MCF 10A (cell line): ENCODE measurements at regions of chr11 and their contacts with region 1.

Region 1: DNA sequence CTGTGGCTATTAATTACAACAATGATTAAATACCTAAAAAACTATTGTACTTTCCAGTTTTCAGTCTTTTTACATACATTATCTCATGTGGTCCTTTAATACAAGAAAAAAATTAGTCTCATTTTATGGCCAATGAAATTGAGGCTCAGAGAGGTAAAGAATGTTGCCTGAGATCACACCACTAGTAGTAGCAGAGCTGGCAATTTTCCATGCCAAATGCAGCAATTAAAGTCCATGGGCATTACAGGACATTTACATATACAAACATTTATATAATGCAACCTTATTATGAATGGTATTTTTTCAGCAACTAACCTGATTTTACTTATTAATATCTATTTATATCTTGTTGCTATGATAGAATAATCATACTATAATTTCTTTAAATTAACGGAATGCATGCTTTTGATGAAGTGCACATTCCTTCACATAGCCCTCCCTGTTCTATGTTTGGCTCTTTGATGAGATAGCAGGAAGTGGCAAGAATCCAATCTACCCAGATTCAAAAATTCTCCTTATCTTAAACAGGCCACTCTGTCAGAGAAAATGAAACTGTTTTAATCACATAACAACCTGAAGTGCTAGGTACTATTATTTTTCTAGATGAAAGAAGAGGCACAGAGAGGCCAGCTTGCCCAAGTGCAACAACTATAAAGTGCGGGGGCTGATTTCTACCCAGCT is 120.9 kb upstream of the LDLRAD3 start:
- DNase-seq: peak; percentile 15
- H3K4me3 Mint-ChIP-seq: no peak overlapping the region
- H3K27ac Mint-ChIP-seq: peak overlapping the region; percentile 29
- H3K4me1 Mint-ChIP-seq: peaks cover 17% of the 10 kb centered on the region
- H3K27me3 Mint-ChIP-seq: no peaks in the 10 kb centered on the region
- CTCF ChIP-seq: no peak

Region 2: DNA sequence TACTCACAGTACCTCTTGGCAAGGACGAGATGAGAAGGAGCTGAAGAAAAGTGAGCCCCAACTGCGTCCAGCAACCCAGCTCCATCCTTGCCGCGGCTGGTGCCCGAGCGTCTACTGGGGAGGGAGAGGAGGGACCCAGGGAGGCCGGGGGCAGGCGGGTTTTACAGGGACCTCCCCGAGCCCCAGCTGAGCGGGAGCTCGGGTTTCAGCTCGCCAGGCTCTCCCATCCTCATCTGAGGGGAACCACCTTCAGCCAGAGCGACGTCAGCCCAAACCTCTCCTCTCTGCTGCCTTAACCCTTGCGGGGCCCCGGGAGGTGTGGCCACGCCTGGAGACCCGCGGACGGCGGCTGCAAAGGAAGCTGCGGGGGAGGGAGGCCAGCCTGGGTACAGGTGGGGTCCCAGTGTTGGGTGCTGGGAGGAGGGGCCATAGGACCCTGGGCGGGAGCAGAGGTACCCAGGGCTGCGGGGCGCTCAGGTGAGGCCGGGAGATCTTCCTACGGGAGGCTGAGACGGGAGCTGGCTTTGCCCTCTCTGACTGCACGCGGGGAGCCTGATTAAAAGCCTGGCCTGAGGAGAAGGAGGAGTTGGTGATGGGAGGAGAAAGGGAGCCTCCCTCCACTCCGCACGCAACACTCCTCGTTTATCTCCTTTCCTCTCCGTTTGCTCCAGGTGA is 297.3 kb before region 1 on chr11 and contains the start of gene PAMR1:
- CTCF ChIA-PET with region 1: no interaction called
- POLR2A ChIA-PET with region 1: no interaction called
- intact Hi-C with region 1: no loop called
- DNase-seq: no peak
- H3K4me3 Mint-ChIP-seq: no peak within 1 kb of the TSS
- H3K27ac Mint-ChIP-seq: no peak within 1 kb of the TSS
- H3K4me1 Mint-ChIP-seq: peaks cover 13% of the 10 kb centered on the region
- H3K27me3 Mint-ChIP-seq: peaks cover 25% of the 10 kb centered on the region
- CTCF ChIP-seq: no peak
- total RNA-seq, gene PAMR1: 0.51 TPM in 1 of 2 replicates, not detected in the other

Region 3: GRCh38 chr11:35617687-35618496 is 205.1 kb before region 1 on chr11 and contains the start of gene FJX1:
- CTCF ChIA-PET with region 1: interaction called, 20 read pairs
- POLR2A ChIA-PET with region 1: interaction called, 25 read pairs
- intact Hi-C with region 1: loop called (anchors 1 kb)
- DNase-seq: peak; percentile 87
- H3K4me3 Mint-ChIP-seq: peak within 1 kb of the TSS; percentile 82
- H3K27ac Mint-ChIP-seq: no peak within 1 kb of the TSS
- H3K4me1 Mint-ChIP-seq: peaks cover 28% of the 10 kb centered on the region
- H3K27me3 Mint-ChIP-seq: no peaks in the 10 kb centered on the region
- CTCF ChIP-seq: no peak
- total RNA-seq, gene FJX1: 33.3 and 53.7 TPM in 2 replicates

Region 4: DNA sequence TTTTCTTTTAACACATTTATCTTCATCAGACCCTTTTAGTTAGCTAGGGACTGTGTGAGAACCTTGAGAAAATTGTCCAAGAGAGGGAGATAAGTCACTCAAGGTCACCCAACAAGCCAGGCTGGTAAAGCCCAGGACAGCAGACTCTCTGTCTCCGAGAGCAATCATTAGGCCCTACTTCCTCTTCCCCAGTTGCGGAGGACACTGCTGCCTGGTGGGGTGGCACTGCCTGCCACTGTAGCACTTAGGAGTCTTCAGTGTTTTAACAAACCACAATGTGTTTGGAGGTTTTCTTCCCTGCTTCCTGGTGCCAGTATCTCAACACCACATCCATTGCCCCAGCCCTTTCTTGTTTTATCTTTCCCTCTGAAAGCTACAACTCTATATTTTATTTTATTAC is 11.2 kb before region 1 on chr11:
- CTCF ChIA-PET with region 1: interaction called, 43 read pairs
- POLR2A ChIA-PET with region 1: interaction called, 6 read pairs
- intact Hi-C with region 1: no loop called
- DNase-seq: no peak
- H3K4me3 Mint-ChIP-seq: no peak overlapping the region
- H3K27ac Mint-ChIP-seq: no peak overlapping the region
- H3K4me1 Mint-ChIP-seq: no peaks in the 10 kb centered on the region
- H3K27me3 Mint-ChIP-seq: no peaks in the 10 kb centered on the region
- CTCF ChIP-seq: no peak

Region 5: GRCh38 chr11:35907648-35908431 is 84.9 kb after region 1 on chr11:
- CTCF ChIA-PET with region 1: interaction called, 14 read pairs
- POLR2A ChIA-PET with region 1: interaction called, 8 read pairs
- intact Hi-C with region 1: no loop called
- DNase-seq: peak; percentile 95
- H3K4me3 Mint-ChIP-seq: peak overlapping the region; percentile 12
- H3K27ac Mint-ChIP-seq: peak overlapping the region; percentile 99
- H3K4me1 Mint-ChIP-seq: peaks cover 57% of the 10 kb centered on the region
- H3K27me3 Mint-ChIP-seq: no peaks in the 10 kb centered on the region
- CTCF ChIP-seq: no peak

Region 6: DNA sequence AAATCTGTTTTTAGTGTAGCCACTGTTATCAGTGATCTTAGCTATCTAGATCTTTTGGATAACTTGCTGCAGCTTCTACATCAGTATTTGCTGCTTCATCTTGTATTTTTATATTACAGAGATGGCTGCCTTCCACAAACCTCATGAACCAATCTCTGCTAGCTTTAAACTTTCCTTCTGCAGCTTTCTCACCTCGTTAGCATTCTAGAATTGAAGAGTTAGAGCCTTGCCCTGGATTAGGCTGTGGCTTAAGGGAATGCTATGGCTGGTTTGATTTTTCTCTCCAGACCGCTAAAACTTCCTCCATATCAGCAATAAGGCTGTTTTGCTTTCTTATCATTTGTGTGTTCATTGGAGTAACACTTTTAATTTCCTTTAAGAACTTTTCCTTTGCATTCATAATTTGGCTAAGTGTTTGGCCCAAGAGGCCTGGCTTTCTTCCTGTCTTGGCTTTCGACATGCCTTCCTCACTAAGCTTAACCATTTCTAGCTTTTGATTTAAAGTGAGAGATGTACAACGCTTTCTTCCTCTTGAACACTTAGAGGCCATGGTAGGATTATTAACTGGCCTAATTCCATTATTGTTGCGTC is 172.8 kb after region 1 on chr11:
- CTCF ChIA-PET with region 1: interaction called, 11 read pairs
- POLR2A ChIA-PET with region 1: interaction called, 3 read pairs
- intact Hi-C with region 1: no loop called
- DNase-seq: no peak
- H3K4me3 Mint-ChIP-seq: no peak overlapping the region
- H3K27ac Mint-ChIP-seq: no peak overlapping the region
- H3K4me1 Mint-ChIP-seq: peaks cover 38% of the 10 kb centered on the region
- H3K27me3 Mint-ChIP-seq: no peaks in the 10 kb centered on the region
- CTCF ChIP-seq: no peak

Region 7: DNA sequence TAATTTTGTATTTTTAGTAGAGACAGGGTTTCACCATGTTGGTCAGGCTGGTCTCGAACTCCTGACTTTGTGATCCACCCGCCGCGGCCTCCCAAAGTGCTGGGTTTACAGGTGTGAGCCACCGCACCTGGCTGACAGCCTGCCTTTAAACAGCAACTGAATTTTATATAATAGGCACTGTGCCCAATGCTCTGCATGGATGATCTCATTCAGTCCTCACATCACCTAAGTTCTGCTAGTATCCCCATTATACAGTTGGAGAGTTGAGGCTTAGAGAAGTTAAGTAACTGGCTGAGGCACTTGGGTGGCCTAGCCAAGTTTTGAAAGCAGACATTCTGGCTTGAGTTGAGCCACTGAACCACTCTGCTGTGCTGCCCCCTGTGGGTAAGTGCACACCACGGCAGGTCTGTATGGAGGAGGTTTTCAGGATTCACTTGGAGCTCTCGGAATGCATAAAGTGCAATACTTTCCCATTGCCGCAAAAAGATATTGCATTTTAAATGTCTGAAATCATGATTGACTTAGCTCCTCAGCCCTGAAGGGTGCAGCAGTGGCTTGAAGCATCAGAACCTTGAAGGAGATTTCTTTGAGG is 233.3 kb after region 1 on chr11:
- CTCF ChIA-PET with region 1: interaction called, 3 read pairs
- POLR2A ChIA-PET with region 1: interaction called, 3 read pairs
- intact Hi-C with region 1: loop called (anchors 2 kb)
- DNase-seq: peak; percentile 61
- H3K4me3 Mint-ChIP-seq: no peak overlapping the region
- H3K27ac Mint-ChIP-seq: no peak overlapping the region
- H3K4me1 Mint-ChIP-seq: peaks cover 8% of the 10 kb centered on the region
- H3K27me3 Mint-ChIP-seq: no peaks in the 10 kb centered on the region
- CTCF ChIP-seq: peak; percentile 49

Region 8: GRCh38 chr11:36455658-36456111 is 632.7 kb after region 1 on chr11:
- CTCF ChIA-PET with region 1: no interaction called
- POLR2A ChIA-PET with region 1: no interaction called
- intact Hi-C with region 1: no loop called
- DNase-seq: peak; percentile 92
- H3K4me3 Mint-ChIP-seq: no peak overlapping the region
- H3K27ac Mint-ChIP-seq: peak overlapping the region; percentile 95
- H3K4me1 Mint-ChIP-seq: peaks cover 23% of the 10 kb centered on the region
- H3K27me3 Mint-ChIP-seq: no peaks in the 10 kb centered on the region
- CTCF ChIP-seq: no peak